Calu3 (cell line): ENCODE measurements at regions of chr9 and their contacts with region 1.

Region 1: DNA sequence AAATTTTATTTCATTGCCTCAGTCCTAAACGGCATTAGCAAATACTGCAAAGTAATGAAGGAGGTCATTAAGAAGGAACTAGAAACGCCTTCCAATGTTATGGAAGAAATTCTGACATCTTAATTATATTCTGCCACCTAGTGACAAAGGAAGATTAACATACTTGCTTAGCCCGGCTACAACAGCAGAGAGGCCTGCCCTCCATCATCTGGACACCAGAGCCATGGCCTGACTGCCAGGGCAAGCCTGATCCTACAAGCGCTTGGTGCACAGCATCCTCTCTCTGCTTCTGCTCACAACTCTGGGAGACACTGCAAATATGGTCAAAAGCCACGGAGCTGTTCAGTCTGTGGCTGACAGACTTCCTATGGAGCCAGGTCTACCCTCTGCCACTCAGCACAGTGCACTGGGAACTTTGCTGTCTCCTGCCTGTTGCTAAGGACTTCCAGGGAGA is 87.3 kb upstream of the SLC44A1 start:
- DNase-seq: peak; percentile 28
- H3K4me3 Mint-ChIP-seq: no peak overlapping the region
- H3K27ac Mint-ChIP-seq: no peak overlapping the region
- H3K4me1 Mint-ChIP-seq: no peaks in the 10 kb centered on the region
- H3K27me3 Mint-ChIP-seq: no peaks in the 10 kb centered on the region
- CTCF ChIP-seq: peak; percentile 15

Region 2: DNA sequence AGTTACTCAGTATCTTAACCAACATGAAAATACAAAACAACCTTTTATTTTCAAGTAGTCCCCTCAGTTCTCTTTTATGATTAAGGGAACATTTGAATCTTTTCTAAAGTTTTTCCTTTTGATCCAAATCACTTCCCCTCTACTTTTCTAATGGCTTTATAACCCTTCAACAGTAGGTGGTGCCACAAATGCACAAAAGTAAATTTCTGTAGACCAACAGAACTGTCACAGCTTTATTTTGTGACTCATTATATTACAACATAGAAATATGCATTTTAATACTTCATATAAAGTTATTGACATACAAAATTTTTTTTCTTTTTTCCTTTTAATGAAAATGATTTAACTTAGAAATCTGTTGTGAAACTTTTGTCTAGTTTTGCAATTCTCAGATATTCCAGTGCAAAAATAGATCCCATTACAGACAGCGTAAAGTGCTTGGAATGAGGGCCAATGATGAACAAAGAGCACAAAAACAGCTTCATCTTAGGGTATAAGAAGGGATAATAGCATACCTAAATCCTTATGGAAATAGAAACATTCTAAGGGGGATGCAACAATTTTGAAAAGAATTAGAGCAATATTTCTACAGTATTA is 376.3 kb before region 1 on chr9:
- CTCF ChIA-PET with region 1: interaction called, 3 read pairs
- intact Hi-C with region 1: loop called (anchors 1 kb)
- DNase-seq: peak; percentile 13
- H3K4me3 Mint-ChIP-seq: no peak overlapping the region
- H3K27ac Mint-ChIP-seq: no peak overlapping the region
- H3K4me1 Mint-ChIP-seq: no peaks in the 10 kb centered on the region
- H3K27me3 Mint-ChIP-seq: peaks cover 10% of the 10 kb centered on the region
- CTCF ChIP-seq: peak; percentile 20

Region 3: DNA sequence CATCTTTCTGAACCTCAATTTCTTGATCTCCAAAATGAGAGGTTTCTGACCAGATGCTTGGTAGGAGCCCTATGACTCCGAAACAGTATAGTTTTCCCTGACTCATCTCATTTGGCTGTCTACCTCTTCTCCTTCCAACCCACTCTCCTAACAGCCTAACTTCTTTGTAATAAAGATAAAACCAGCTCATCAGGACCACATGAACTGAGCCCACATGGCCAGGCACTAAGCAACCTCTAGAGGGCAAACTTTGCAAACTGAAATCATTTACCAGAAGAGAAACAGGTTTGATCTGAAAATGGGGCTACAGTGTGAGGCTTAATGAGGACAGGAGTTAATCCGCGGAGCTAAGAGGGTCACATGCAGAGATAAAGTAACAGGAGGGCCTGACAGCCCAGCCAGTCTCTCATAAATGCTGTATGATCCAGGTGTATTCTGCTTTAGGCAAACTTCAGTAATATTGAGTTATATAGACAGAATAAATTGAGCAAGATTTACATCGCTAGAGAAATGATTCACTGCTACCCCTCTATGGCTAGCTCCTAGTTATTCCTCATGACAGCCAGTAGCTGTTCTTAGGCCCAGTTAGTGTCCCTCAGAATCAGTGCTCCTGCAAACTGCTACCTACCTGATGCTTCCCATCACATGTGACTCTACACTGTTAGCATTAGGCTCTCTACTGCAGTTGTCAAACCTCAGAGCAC is 293.8 kb before region 1 on chr9:
- CTCF ChIA-PET with region 1: no interaction called
- intact Hi-C with region 1: loop called (anchors 1 kb)
- DNase-seq: peak; percentile 44
- H3K4me3 Mint-ChIP-seq: no peak overlapping the region
- H3K27ac Mint-ChIP-seq: no peak overlapping the region
- H3K4me1 Mint-ChIP-seq: peaks cover 13% of the 10 kb centered on the region
- H3K27me3 Mint-ChIP-seq: no peaks in the 10 kb centered on the region
- CTCF ChIP-seq: peak; percentile 32

Region 4: DNA sequence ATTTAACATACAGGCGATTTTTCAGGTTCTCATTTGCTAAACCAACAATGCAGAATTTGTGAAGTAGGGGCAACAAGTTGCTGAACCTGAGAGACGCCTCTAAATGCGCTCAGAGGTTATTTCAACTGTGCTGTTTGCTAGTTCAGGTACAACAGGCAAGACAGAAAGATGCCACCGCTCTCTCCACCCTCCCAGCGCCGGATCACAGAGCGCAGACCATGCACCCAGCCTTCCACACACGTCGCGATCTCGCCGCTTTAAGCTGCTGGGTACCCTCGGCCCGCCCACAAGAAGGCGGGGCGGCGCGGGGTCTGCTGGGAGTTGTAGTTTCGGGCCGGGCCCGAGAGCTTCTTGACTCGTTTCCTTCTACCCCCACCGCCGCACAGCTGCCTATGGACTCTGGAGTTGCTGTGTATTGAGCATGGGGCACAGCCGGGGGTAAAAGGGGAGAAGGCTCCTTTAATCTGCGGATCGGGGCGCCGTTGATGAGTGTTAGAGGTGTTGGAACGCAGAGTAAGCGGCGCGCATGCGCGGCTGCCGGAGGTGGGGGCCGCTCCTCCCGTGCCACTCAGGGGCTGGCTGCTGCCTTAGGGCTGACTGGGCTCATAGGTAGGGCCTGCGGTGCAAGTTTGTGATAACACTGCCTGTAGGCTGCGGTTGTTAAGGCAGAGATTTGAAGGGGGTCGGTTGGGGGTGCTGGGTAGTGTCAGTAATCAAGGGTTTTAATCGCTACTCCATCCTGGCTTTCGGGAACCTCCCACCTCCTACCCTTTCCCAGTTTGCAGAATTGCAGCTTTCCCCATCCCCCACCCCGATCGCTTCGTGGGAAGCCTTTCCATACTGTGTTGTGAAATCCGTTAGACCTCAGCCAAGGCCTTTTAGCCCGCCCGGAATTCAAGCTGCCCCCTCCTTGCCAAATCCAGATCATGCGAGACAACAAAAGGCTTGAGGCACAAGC is 188.9 kb before region 1 on chr9:
- CTCF ChIA-PET with region 1: interaction called, 6 read pairs
- intact Hi-C with region 1: loop called (anchors 10 kb)
- DNase-seq: peak; percentile 76
- H3K4me3 Mint-ChIP-seq: peak overlapping the region; percentile 80
- H3K27ac Mint-ChIP-seq: no peak overlapping the region
- H3K4me1 Mint-ChIP-seq: no peaks in the 10 kb centered on the region
- H3K27me3 Mint-ChIP-seq: peaks cover 33% of the 10 kb centered on the region
- CTCF ChIP-seq: no peak

Region 5: GRCh38 chr9:105216440-105217178 is 59.5 kb after region 1 on chr9:
- CTCF ChIA-PET with region 1: no interaction called
- intact Hi-C with region 1: no loop called
- DNase-seq: no peak
- H3K4me3 Mint-ChIP-seq: no peak overlapping the region
- H3K27ac Mint-ChIP-seq: no peak overlapping the region
- H3K4me1 Mint-ChIP-seq: peaks cover 6% of the 10 kb centered on the region
- H3K27me3 Mint-ChIP-seq: no peaks in the 10 kb centered on the region
- CTCF ChIP-seq: no peak

Region 6: DNA sequence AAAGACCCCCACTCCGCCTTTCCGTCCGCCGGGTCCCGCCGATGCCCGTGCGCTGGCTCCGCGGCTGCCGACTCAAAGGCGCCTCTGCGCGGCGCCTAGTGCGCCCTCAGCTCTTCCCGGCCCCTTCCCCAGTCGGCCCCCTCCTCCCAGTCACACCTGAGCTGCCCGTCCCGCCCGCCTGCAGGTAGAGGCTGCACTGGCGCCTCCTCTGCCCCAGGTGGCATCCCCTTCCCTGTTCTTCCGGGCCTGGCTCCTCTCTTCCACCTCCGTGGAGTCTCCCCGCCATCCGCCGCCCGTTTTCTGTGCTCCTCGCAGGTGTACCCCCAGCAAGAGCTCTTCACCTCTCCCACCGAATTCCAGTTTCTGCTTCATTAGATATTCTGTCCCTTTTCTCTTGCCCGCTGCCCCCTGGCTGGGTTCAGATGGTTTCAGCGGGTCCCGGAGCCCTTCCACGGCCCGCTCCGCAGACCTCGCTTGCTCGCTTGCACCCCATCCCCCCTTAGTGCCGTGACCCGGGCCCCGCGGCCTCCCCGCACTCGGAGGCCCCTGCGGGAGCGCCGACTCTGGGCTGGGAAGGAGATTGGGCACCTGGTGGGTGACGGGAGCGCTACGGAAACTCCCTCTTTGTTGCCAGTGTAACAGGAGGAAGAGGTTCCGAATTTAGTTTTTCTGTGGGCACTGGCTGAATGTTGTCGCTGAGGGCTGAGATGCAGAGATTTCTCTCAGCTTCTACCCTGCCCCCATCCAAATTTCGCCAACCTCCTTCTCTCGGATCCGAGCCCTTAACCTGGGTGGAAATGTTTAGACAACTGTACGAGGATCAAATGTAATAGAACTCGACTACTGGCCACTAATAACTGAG is 88.1 kb after region 1 on chr9:
- CTCF ChIA-PET with region 1: interaction called, 5 read pairs
- intact Hi-C with region 1: loop called (anchors 5 kb)
- DNase-seq: peak; percentile 78
- H3K4me3 Mint-ChIP-seq: peak overlapping the region; percentile 96
- H3K27ac Mint-ChIP-seq: peak overlapping the region; percentile 70
- H3K4me1 Mint-ChIP-seq: peaks cover 7% of the 10 kb centered on the region
- H3K27me3 Mint-ChIP-seq: no peaks in the 10 kb centered on the region
- CTCF ChIP-seq: no peak